Common myeloid progenitor, CD34-positive (primary cell): ENCODE measurements at regions of chr4 and their contacts with region 1.

Region 1: DNA sequence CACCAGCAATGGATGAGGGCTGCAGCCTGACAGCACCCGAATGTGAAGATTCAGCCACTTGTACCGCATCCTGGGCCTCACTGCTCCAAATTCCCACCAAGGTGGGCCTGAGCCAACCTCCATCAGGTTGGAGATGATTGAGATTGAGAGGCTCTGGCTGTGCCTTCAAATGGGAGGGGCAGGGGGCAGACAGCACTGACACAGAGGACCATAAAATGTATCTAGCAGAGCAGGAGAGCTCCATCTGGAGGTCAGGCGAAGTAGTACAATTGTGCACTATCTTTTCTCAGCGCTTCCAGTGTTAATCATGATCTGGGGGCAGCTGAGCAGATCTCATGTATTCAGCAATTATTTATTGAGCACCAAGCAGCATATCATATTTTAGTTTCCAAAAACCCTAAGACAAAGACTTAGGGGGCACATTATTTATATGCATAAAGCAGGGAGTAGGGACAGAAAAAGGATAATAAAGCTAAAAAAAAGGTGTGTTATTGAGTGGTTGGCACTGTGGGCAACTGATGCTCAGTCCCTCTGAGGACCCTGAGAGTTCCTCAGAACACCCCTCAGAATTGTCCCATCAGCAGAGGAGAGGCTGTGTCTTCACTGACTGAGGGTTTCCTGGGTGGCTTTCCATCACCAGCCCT is 31.6 kb upstream of the C1QTNF7 start:
- DNase-seq: peak; percentile 63 to 77 (median 70)
- H3K4me3 ChIP-seq: no peak overlapping the region
- H3K27ac ChIP-seq: no peak overlapping the region
- H3K4me1 ChIP-seq: peaks cover 10 to 31% (median 27%) of the 10 kb centered on the region in 4 experiments
- H3K27me3 ChIP-seq: no peaks in the 10 kb centered on the region

Region 2: DNA sequence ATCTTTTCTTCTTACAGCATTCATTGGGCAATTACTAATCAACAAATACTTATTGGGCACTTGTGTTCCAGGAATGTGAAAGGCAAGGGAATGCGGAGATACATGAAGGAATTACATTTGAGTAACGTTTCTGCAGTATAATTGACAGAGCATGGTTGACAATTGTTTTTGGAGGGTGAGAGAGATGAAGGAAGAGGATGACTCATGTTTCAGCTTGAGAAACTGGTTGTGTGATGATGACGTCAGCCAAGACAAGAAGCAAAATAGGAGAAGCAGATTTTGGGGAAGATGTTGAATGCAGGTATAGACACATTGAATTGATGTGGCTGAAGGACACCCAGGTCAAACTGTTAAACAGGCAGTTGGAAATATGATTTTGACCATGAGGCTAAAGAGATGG is 402.0 kb before region 1 on chr4:
- CTCF ChIA-PET with region 1: no interaction called
- POLR2A ChIA-PET with region 1: no interaction called
- DNase-seq: peak in 2 of 3 donors; percentile 19 to 22
- H3K4me3 ChIP-seq: no peak overlapping the region
- H3K27ac ChIP-seq: no peak overlapping the region
- H3K4me1 ChIP-seq: no peaks in the 10 kb centered on the region
- H3K27me3 ChIP-seq: no peaks in the 10 kb centered on the region

Region 3: DNA sequence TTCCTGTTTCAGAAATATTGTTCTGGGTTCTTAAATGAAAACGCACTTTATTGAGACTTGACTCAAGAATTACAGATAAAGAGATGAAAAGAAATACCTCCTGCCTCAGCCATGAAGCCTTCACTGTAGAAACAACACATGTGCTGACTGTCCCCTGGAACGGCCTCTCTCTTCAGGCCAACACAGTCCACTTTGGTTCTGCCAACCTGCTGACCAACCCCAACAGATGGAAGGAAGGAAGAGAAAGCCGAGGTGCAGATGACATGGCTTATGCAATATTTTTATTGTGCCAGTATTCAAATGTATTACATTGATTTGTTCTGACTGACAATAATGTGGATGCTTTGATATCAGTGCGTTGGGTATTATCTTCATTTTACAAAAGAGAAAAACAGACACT is 223.0 kb before region 1 on chr4:
- CTCF ChIA-PET with region 1: no interaction called
- POLR2A ChIA-PET with region 1: no interaction called
- DNase-seq: no peak
- H3K4me3 ChIP-seq: no peak overlapping the region
- H3K27ac ChIP-seq: no peak overlapping the region
- H3K4me1 ChIP-seq: no peaks in the 10 kb centered on the region
- H3K27me3 ChIP-seq: no peaks in the 10 kb centered on the region

Region 4: GRCh38 chr4:15238720-15239119 is 157.6 kb before region 1 on chr4:
- CTCF ChIA-PET with region 1: interaction called, 35 read pairs
- POLR2A ChIA-PET with region 1: no interaction called
- DNase-seq: peak; percentile 47 to 70 (median 60)
- H3K4me3 ChIP-seq: no peak overlapping the region
- H3K27ac ChIP-seq: no peak overlapping the region
- H3K4me1 ChIP-seq: peaks cover 0 to 5% (median 4%) of the 10 kb centered on the region in 4 experiments
- H3K27me3 ChIP-seq: no peaks in the 10 kb centered on the region

Region 5: DNA sequence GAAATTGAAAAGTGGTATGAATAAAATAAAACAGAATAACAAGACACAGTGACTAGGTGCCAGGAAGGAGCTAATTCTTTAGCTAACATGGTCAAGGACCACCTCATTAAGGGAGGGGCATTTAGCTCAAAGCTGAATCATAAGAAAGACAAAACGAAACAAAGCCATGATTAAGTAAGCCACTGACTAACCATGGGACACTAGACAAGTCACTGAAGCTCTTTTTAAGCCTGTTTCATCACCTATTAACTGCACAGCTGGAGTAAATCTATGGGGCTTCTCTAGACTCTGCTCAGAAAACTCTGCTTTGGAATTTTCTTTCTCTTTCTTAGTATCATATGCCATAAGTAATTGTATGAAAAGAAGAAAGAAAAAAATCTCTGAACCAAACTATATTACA is 18.2 kb before region 1 on chr4:
- CTCF ChIA-PET with region 1: interaction called, 10 read pairs
- POLR2A ChIA-PET with region 1: no interaction called
- DNase-seq: peak in 1 of 3 donors; percentile 20
- H3K4me3 ChIP-seq: no peak overlapping the region
- H3K27ac ChIP-seq: no peak overlapping the region
- H3K4me1 ChIP-seq: peaks cover 0 to 24% (median 14%) of the 10 kb centered on the region in 4 experiments
- H3K27me3 ChIP-seq: no peaks in the 10 kb centered on the region